Activated naive CD8-positive, alpha-beta T cell treated with anti-CD3 and anti-CD28 coated beads, Interleukin-2, amount 10 ng/mL, durations not matched to agents 7 days and 5 days (primary cell): ENCODE measurements at regions of chr14 and their contacts with region 1.

Region 1: GRCh38 chr14:22556990-22557623 is 31.9 kb downstream of the DAD1 start:
- DNase-seq: peak; percentile 97
- ATAC-seq: peak; percentile 19
- H3K4me3 Mint-ChIP-seq: peak overlapping the region; percentile 65
- H3K27ac Mint-ChIP-seq: peak overlapping the region; percentile 93
- H3K4me1 Mint-ChIP-seq: peaks cover 84% of the 10 kb centered on the region
- H3K27me3 Mint-ChIP-seq: no peaks in the 10 kb centered on the region

Region 2: DNA sequence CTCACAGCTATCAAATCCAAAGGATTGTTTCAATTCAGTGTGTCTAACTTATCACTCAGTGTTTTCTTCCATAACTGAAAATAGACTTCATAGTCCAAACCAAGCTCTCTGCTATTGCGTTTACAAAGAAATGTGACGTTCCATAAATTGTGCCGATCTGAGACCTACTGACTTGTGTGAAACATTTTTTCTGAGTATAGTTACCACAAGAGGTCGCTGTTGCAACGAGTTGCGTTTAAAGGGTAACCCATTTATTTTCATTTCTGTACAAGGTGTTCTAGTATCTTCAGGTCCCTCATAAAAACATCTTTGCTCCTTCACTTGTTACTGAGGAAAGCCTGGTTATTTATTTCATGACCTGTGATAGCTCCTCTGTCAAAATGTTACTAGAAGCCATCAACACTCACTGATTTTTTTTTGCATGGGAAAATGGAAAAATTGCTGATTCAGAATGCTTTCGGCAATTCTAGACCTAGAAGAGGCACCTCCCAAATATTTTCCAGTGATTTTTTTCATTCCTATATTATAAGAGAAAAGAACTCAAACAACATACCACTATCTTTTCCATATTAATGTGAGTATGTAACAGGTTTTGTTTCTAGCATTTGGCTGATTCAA is 822.5 kb before region 1 on chr14:
- POLR2A ChIA-PET with region 1: interaction called, 11 read pairs
- DNase-seq: no peak
- ATAC-seq: peak; percentile 19
- H3K4me3 Mint-ChIP-seq: peak overlapping the region; percentile 64
- H3K27ac Mint-ChIP-seq: peak overlapping the region; percentile 28
- H3K4me1 Mint-ChIP-seq: peaks cover 10% of the 10 kb centered on the region
- H3K27me3 Mint-ChIP-seq: peaks cover 34% of the 10 kb centered on the region

Region 3: GRCh38 chr14:21997300-21997699 is 559.8 kb before region 1 on chr14:
- POLR2A ChIA-PET with region 1: interaction called, 26 read pairs
- DNase-seq: no peak
- ATAC-seq: peak; percentile 88
- H3K4me3 Mint-ChIP-seq: peak overlapping the region; percentile 96
- H3K27ac Mint-ChIP-seq: peak overlapping the region; percentile 96
- H3K4me1 Mint-ChIP-seq: peaks cover 17% of the 10 kb centered on the region
- H3K27me3 Mint-ChIP-seq: no peaks in the 10 kb centered on the region

Region 4: GRCh38 chr14:22519877-22520685 is 37.0 kb before region 1 on chr14:
- POLR2A ChIA-PET with region 1: interaction called, 646 read pairs
- DNase-seq: no peak
- ATAC-seq: no peak
- H3K4me3 Mint-ChIP-seq: peak overlapping the region; percentile 99
- H3K27ac Mint-ChIP-seq: peak overlapping the region; percentile 98
- H3K4me1 Mint-ChIP-seq: peaks cover 74% of the 10 kb centered on the region
- H3K27me3 Mint-ChIP-seq: no peaks in the 10 kb centered on the region

Region 5: DNA sequence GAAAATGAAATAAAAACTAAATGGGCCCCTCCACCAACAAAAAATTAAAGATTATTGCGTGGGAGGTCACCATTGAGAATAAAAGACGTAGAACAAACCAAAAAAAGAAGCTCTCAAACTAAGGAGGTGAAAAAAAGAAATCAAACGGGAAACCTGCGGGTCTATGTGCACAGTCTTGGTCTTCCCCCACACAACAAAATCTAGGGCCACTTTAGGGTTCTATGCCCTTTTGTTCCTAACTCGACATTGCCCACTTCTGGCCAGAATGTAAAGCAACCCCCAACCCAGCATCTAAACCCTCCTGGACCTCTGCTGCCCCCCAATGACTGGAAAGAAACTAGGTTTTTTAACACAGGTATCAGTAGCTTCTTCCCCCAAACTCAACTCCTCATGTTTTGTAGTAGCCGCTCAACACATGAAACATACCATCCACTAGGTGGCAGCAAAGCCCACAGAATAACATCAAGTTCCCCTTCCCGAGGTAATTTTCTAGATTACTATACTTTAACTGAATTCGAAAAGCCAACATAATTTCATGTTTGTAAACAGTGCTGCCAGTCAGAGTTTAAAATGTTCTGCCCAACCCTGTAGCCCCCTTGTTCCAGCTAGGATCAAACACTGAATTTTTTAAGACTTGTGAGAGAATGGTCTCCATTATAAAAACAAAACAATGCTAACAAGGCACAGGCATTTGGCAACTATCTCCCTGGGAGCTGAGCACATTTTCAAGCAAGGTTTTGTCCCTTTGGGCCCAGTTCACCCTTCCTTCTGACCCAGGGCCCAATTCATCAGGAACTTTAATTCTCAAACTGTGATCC is 13.2 kb after region 1 on chr14:
- POLR2A ChIA-PET with region 1: interaction called, 224 read pairs
- DNase-seq: peak; percentile 64
- ATAC-seq: peak; percentile 85
- H3K4me3 Mint-ChIP-seq: peak overlapping the region; percentile 93
- H3K27ac Mint-ChIP-seq: peak overlapping the region; percentile 96
- H3K4me1 Mint-ChIP-seq: peaks cover 50% of the 10 kb centered on the region
- H3K27me3 Mint-ChIP-seq: no peaks in the 10 kb centered on the region

Region 6: GRCh38 chr14:22622255-22622654 is 65.1 kb after region 1 on chr14:
- POLR2A ChIA-PET with region 1: no interaction called
- DNase-seq: no peak
- ATAC-seq: no peak
- H3K4me3 Mint-ChIP-seq: no peak overlapping the region
- H3K27ac Mint-ChIP-seq: no peak overlapping the region
- H3K4me1 Mint-ChIP-seq: peaks cover 2% of the 10 kb centered on the region
- H3K27me3 Mint-ChIP-seq: peaks cover 18% of the 10 kb centered on the region